ENCODE measurements at regions of chr6 and their contacts with region 1.

Region 1: DNA sequence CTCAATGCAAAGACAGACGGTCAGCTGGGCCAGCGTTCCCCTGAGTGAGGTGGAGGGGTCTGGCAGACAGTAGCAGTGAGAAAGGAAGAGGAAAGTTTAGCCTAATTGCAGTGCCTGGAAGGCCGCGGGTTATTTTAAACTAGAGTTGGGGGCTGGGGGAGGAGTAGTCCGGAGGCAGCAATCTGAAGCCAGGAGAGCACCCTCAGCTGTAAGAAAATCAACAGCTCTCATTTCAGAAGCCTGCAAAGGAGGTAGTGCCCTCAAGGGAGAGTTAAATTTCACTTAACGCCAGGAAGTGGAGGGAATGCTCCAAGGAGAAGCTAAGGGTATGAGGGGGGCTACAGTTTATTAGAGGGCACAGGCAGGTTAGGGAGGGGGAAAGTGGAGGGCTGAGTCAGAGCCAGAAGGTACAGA is 26.9 kb downstream of the RING1 start:
- DNase-seq: no peak
- H3K4me3 ChIP-seq: no peak overlapping the region
- H3K27ac ChIP-seq: no peak overlapping the region
- H3K4me1 ChIP-seq: no peaks in the 10 kb centered on the region
- H3K27me3 ChIP-seq: no peaks in the 10 kb centered on the region
- CTCF ChIP-seq: no peak

Region 2: GRCh38 chr6:33112148-33112547 is 123.1 kb before region 1 on chr6:
- CTCF ChIA-PET with region 1: no interaction called
- dilution Hi-C with region 1: loop called (anchors 10 kb)
- in situ Hi-C with region 1: loop called in 1 of 2 experiments (anchors 10 kb)
- intact Hi-C with region 1: no loop called
- DNase-seq: peak; percentile 36
- H3K4me3 ChIP-seq: no peak overlapping the region
- H3K27ac ChIP-seq: no peak overlapping the region
- H3K4me1 ChIP-seq: no peaks in the 10 kb centered on the region
- H3K27me3 ChIP-seq: peaks cover 6% of the 10 kb centered on the region
- CTCF ChIP-seq: no peak

Region 3: GRCh38 chr6:33132081-33132524 is 103.1 kb before region 1 on chr6:
- CTCF ChIA-PET with region 1: no interaction called
- dilution Hi-C with region 1: loop called (anchors 5 kb)
- in situ Hi-C with region 1: no loop called
- intact Hi-C with region 1: no loop called
- DNase-seq: no peak
- H3K4me3 ChIP-seq: no peak overlapping the region
- H3K27ac ChIP-seq: no peak overlapping the region
- H3K4me1 ChIP-seq: no peaks in the 10 kb centered on the region
- H3K27me3 ChIP-seq: no peaks in the 10 kb centered on the region
- CTCF ChIP-seq: no peak